ENCODE measurements at regions of chr2 and their contacts with region 1.

Region 1: DNA sequence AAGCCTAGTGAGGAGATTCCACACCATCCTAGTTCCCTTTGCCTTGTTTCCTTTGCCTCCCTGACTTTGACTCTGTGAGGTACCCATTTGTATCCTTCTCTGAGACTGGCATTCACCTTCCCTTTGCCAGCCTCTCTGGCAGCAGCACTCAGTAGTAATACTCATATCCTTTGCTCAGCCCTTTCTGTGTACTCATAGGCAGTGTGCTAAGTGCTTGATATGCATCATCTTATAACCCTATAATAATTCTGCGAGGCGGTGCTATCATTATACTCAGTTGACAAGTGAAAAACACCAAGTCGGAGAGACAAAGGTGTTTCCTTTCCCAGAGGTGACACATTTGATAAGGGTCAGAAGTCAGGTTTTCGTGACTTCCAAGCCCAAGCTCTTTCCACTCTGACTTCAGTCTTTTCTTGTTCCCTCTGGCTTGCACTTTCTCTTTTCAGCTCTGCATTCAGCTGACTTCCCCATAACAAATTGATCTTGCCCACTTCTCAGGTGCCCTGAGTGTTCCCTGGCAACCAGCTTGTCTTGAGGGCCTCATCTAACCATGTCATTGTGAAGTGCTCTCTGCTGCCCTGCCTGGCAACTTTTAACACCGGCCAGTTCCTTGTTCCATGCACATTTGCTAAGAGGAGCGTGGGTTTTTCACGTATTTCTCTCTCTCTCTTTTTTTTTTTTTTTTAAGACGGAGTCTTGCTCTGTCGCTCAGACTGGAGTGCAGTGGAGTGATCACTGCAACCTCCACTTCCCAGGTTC is 94.5 kb upstream of the UPP2 start:
- DNase-seq: no peak
- ATAC-seq: peak; percentile 66
- H3K4me3 ChIP-seq: no peak overlapping the region
- H3K27ac ChIP-seq: no peak overlapping the region
- H3K4me1 ChIP-seq: no peaks in the 10 kb centered on the region
- H3K27me3 ChIP-seq: peaks cover 0 to 14% of the 10 kb centered on the region in 2 experiments; a peak in 4 of 5 replicates
- CTCF ChIP-seq: no peak
- EP300 ChIP-seq: no peak
- POLR2A ChIP-seq: no peak
- RAD21 ChIP-seq: no peak

Region 2: GRCh38 chr2:157492189-157492773 is 514.9 kb before region 1 on chr2:
- CTCF ChIA-PET with region 1: interaction called, 31 read pairs
- POLR2A ChIA-PET with region 1: no interaction called
- in situ Hi-C with region 1: loop called (anchors 5 kb)
- intact Hi-C with region 1: loop called (anchors 1 kb)
- DNase-seq: peak; percentile 56
- ATAC-seq: peak; percentile 99
- H3K4me3 ChIP-seq: no peak overlapping the region
- H3K27ac ChIP-seq: no peak overlapping the region
- H3K4me1 ChIP-seq: no peaks in the 10 kb centered on the region
- H3K27me3 ChIP-seq: no peaks in the 10 kb centered on the region
- CTCF ChIP-seq: peak; percentile 88
- EP300 ChIP-seq: no peak
- POLR2A ChIP-seq: no peak
- RAD21 ChIP-seq: peak; percentile 73

Region 3: GRCh38 chr2:157572725-157573124 is 434.4 kb before region 1 on chr2:
- CTCF ChIA-PET with region 1: no interaction called
- POLR2A ChIA-PET with region 1: no interaction called
- in situ Hi-C with region 1: no loop called
- intact Hi-C with region 1: loop called (anchors 5 kb)
- DNase-seq: peak; percentile 29
- ATAC-seq: peak; percentile 93
- H3K4me3 ChIP-seq: no peak overlapping the region
- H3K27ac ChIP-seq: no peak overlapping the region
- H3K4me1 ChIP-seq: no peaks in the 10 kb centered on the region
- H3K27me3 ChIP-seq: no peaks in the 10 kb centered on the region
- CTCF ChIP-seq: peak; percentile 36
- EP300 ChIP-seq: no peak
- POLR2A ChIP-seq: no peak
- RAD21 ChIP-seq: no peak

Region 4: GRCh38 chr2:157777427-157777826 is 229.7 kb before region 1 on chr2:
- CTCF ChIA-PET with region 1: interaction called, 69 read pairs
- POLR2A ChIA-PET with region 1: no interaction called
- in situ Hi-C with region 1: loop called (anchors 5 kb)
- intact Hi-C with region 1: loop called (anchors 1 kb)
- DNase-seq: peak; percentile 55
- ATAC-seq: peak; percentile 37; the same call in 1 of the 3 replicates
- H3K4me3 ChIP-seq: no peak overlapping the region
- H3K27ac ChIP-seq: no peak overlapping the region
- H3K4me1 ChIP-seq: peaks cover 12% of the 10 kb centered on the region
- H3K27me3 ChIP-seq: no peaks in the 10 kb centered on the region
- CTCF ChIP-seq: peak; percentile 65
- EP300 ChIP-seq: no peak
- POLR2A ChIP-seq: no peak
- RAD21 ChIP-seq: peak; percentile 78

Region 5: DNA sequence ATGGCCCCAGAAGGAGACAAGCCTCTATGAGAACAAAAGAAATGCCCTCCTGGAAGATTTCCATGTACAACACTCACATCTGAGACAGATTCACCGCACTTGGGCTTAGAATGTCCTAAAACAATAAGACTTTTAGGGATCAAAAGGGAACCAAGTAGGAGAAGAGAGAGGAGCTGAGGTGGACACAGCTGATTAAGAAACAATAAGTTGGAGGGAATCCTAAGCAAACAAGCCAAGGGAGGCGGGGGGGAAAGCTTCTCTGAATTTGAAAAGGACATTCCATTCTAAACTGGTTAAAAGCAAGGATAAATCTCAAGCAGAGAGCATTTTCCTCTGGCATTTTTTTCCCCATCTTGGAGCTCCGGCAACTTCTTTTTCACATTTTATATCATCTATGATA is 140.9 kb before region 1 on chr2:
- CTCF ChIA-PET with region 1: no interaction called
- POLR2A ChIA-PET with region 1: no interaction called
- in situ Hi-C with region 1: no loop called
- intact Hi-C with region 1: no loop called
- DNase-seq: no peak
- ATAC-seq: no peak; the same call in 2 of the 3 replicates
- H3K4me3 ChIP-seq: no peak overlapping the region
- H3K27ac ChIP-seq: no peak overlapping the region
- H3K4me1 ChIP-seq: peaks cover 25% of the 10 kb centered on the region
- H3K27me3 ChIP-seq: no peaks in the 10 kb centered on the region
- CTCF ChIP-seq: no peak
- EP300 ChIP-seq: no peak
- POLR2A ChIP-seq: no peak
- RAD21 ChIP-seq: no peak

Region 6: GRCh38 chr2:157890969-157891639 is 116.0 kb before region 1 on chr2:
- CTCF ChIA-PET with region 1: no interaction called
- POLR2A ChIA-PET with region 1: no interaction called
- in situ Hi-C with region 1: no loop called
- intact Hi-C with region 1: no loop called
- DNase-seq: no peak
- ATAC-seq: no peak
- H3K4me3 ChIP-seq: no peak overlapping the region
- H3K27ac ChIP-seq: no peak overlapping the region
- H3K4me1 ChIP-seq: no peaks in the 10 kb centered on the region
- H3K27me3 ChIP-seq: no peaks in the 10 kb centered on the region
- CTCF ChIP-seq: no peak
- EP300 ChIP-seq: no peak
- POLR2A ChIP-seq: no peak
- RAD21 ChIP-seq: no peak